Left colon (tissue), 2 donors: ENCODE measurements at regions of chr22 and their contacts with region 1.

Region 1: DNA sequence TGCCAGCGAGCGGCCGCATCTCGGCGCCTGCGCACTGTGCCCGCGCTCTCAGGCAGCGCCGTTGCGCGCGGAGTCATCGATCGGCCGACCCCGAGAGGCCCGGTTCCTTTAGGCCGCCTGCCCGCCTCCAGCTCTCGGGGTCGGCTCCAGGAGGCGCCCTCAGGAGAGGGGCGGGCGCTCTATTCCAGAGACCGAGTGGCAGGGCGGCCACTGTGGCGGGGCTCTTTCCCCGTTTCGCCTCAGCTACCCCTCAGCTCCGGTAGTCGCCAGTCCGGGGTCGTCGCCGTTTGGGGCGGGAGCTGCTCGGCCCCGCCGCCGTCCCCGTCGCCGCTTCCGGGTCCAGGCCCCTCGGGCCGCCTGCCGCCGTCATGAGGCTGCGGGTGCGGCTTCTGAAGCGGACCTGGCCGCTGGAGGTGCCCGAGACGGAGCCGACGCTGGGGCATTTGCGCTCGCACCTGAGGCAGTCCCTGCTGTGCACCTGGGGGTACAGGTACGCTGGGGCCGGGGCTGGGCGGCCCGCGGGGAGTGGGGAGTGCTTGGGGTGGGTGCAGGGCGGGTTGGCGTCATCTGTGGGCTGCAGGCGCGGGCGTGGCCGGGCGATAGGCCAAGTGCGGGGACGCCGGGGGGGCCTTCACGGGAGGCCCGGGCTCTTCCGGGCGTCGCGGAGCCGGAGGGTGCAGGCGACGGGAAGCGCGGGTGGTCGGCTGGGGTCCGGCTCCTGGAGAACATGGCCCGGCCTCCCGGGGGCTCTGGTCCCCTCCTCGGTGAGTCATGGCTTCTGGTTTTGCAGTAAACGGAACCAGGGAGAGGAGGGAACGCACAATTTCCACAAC is at the start of gene FBXO7:
- DNase-seq: peak; percentile 87 to 94
- ATAC-seq: peak; percentile 82
- total RNA-seq, gene FBXO7: 66.9 to 84.2 TPM

Region 2: GRCh38 chr22:31970490-31971444 is 504.1 kb before region 1 on chr22:
- intact Hi-C with region 1: loop called in 1 of 2 experiments (anchors 10 kb)
- DNase-seq: peak; percentile 75 to 89
- ATAC-seq: peak; percentile 72

Region 3: GRCh38 chr22:32528984-32529982 is 54.4 kb after region 1 on chr22:
- intact Hi-C with region 1: no loop called
- DNase-seq: peak; percentile 82 to 88
- ATAC-seq: peak; percentile 76

Region 4: GRCh38 chr22:32615874-32616564 is 141.2 kb after region 1 on chr22:
- intact Hi-C with region 1: no loop called
- DNase-seq: no peak
- ATAC-seq: no peak

Region 5: GRCh38 chr22:32660292-32660691 is 185.4 kb after region 1 on chr22:
- intact Hi-C with region 1: no loop called
- DNase-seq: peak; percentile 46 to 73
- ATAC-seq: peak; percentile 87

Region 6: DNA sequence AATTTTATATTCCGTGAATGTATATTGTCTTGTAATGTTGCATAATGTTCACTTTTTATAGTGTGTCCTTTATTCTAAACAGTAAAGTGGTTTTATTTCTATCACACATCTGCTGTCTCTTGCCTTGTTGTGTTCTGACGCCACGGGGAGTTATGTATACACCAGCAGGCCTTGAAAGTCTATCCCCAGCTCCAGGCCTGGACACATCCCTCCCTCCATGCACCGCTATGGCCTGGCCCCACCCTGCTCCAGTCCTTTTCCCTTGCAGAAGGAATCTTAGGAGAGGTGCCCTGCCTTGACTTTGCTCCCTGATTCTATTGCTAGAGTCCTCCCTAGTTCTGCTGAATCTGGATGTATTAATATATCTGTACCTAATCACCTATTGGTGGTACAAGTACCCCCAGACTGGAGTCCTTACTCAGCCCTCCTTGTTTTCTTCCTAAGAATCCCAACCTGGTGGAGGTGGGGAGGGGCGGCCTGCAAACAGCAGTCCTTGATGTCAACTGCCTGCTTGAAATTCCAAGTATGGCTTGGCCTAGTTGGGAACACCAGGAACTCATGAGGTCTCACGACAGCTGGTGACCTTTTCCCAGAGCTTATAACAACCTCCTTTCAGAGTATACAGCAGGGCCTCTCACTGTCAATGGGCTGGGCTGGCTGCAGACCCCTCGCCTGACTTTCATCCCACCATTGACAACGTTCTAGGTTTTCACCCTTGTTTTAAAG is 388.2 kb after region 1 on chr22:
- intact Hi-C with region 1: no loop called
- DNase-seq: no peak
- ATAC-seq: no peak